Tibial artery (tissue), 4 donors: ENCODE measurements at regions of chr4 and their contacts with region 1.

Region 1: GRCh38 chr4:99054428-99054994 is 34.1 kb downstream of the ADH5 start:
- DNase-seq: no peak
- H3K4me3 ChIP-seq: no peak overlapping the region
- H3K27ac ChIP-seq: no peak overlapping the region
- H3K4me1 ChIP-seq: peaks cover 0 to 6% (median 0%) of the 10 kb centered on the region in 4 donors
- H3K27me3 ChIP-seq: no peaks in the 10 kb centered on the region
- CTCF ChIP-seq: no peak

Region 2: GRCh38 chr4:98474408-98474844 is 580.1 kb before region 1 on chr4:
- intact Hi-C with region 1: loop called (anchors 5 kb)
- DNase-seq: no peak
- H3K4me3 ChIP-seq: no peak overlapping the region
- H3K27ac ChIP-seq: no peak overlapping the region
- H3K4me1 ChIP-seq: no peaks in the 10 kb centered on the region
- H3K27me3 ChIP-seq: no peaks in the 10 kb centered on the region
- CTCF ChIP-seq: no peak

Region 3: DNA sequence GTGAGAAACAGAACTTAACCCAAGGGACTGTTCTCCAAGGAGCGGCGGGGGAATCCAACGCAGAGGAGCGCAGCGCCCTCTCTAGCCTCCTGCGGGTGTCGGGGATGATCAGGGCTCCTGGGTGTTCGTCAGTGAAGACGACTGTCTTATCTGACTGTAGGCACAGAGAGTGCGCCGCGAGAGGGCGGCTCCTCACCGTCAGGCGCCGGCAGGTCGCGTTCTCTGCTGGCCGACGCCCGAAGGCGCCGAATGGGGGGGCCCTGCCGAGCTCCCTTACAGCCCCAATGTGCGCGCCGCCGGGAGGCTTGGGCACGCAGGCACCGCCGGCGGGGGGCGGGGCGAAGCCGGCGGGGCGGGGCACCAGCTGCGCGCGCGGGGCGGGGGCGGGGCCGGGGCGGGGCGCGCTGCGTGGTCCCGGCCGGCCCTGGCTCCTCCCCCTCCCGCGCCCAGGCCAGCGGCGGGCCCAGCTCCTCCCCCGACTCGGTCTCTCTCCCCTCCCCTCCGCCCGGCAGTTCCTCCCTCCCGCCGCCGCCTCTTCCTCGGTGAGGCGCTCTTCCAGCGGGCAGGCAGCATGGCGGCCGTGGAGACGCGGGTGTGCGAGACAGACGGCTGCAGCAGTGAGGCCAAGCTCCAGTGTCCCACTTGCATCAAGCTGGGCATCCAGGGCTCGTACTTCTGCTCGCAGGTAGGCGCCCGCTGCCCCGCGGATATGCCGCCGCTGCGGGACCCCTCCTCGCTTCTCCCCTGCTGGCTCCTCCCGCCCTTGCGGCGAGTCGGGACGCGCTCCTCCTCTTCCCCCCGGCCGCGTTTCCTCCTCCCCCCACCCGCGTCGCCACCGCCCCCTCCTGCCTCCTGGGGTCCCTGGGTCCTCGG is 59.1 kb before region 1 on chr4 and contains the start of gene METAP1:
- intact Hi-C with region 1: loop called (anchors 5 kb)
- DNase-seq: peak; percentile 90 to 94
- H3K4me3 ChIP-seq: peak within 1 kb of the TSS; percentile 79 to 100
- H3K27ac ChIP-seq: peak within 1 kb of the TSS; percentile 87
- H3K4me1 ChIP-seq: peaks cover 0 to 30% (median 3%) of the 10 kb centered on the region in 4 donors
- H3K27me3 ChIP-seq: no peaks in the 10 kb centered on the region
- CTCF ChIP-seq: peak; percentile 37 to 44